ENCODE measurements at regions of chr10 and their contacts with region 1.

Region 1: GRCh38 chr10:91908337-91909116 is 759 bp downstream of the FGFBP3 start:
- DNase-seq: peak; percentile 83
- ATAC-seq: peak; percentile 89
- H3K4me3 ChIP-seq: peak overlapping the region; percentile 90
- H3K27ac ChIP-seq: no peak overlapping the region
- H3K4me1 ChIP-seq: 0 out of 2 replicates have a peak, but pooled peaks cover 16% of the 10 kb centered on the region
- H3K27me3 ChIP-seq: no peaks in the 10 kb centered on the region
- CTCF ChIP-seq: peak; percentile 54

Region 2: GRCh38 chr10:91643700-91644099 is 264.8 kb before region 1 on chr10:
- CTCF ChIA-PET with region 1: no interaction called
- POLR2A ChIA-PET with region 1: no interaction called
- intact Hi-C with region 1: loop called (anchors 2 kb)
- DNase-seq: peak; percentile 63
- ATAC-seq: peak; percentile 85
- H3K4me3 ChIP-seq: no peak overlapping the region
- H3K27ac ChIP-seq: no peak overlapping the region
- H3K4me1 ChIP-seq: peaks cover 9% of the 10 kb centered on the region
- H3K27me3 ChIP-seq: no peaks in the 10 kb centered on the region
- CTCF ChIP-seq: peak; percentile 61

Region 3: DNA sequence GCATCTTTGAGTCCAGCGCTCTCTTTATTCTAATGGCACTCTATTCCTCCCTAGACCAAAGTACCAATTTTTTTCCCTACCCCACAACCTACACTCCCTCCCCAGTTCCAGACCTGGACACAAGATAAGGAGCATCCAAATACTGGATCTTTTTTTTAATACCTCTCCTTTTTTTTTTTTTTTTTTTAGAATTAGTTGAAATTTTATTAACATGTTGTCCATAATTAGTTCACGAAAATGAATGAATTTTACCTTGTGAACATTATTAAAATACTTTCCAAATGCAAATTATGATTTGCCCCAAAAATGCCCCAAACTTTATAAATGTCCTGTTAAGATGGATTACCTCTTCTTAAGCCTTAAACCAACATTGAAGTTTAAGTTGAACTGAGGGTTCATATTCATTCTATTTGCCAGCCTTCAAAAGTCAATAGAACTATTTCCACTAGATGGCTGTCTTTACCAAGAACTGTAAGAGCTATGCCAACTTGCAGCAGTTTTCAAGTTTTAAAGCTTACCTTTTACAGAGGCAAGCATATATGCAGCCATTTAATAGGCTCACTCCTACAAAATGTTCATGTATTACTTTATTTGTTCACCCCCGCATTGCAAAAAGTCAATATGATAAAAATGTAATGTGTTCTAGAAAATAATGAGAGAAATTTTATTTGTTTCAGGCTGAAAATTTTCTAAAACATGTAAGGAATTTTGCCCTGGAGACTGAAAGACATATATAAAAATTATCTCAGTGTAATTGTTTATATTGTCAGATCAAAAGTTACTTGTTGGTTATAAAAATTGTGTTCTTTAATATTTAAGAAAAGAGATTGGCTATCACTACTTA is 150.0 kb before region 1 on chr10:
- CTCF ChIA-PET with region 1: interaction called, 4 read pairs
- POLR2A ChIA-PET with region 1: no interaction called
- intact Hi-C with region 1: loop called (anchors 1 kb)
- DNase-seq: peak; percentile 75
- ATAC-seq: peak; percentile 77
- H3K4me3 ChIP-seq: no peak overlapping the region
- H3K27ac ChIP-seq: no peak overlapping the region
- H3K4me1 ChIP-seq: no peaks in the 10 kb centered on the region; the same call in 1 of the 2 replicates
- H3K27me3 ChIP-seq: no peaks in the 10 kb centered on the region
- CTCF ChIP-seq: peak; percentile 71

Region 4: GRCh38 chr10:91856637-91857036 is 51.9 kb before region 1 on chr10:
- CTCF ChIA-PET with region 1: interaction called, 4 read pairs
- POLR2A ChIA-PET with region 1: no interaction called
- intact Hi-C with region 1: loop called (anchors 2 kb)
- DNase-seq: peak; percentile 39
- ATAC-seq: no peak
- H3K4me3 ChIP-seq: no peak overlapping the region
- H3K27ac ChIP-seq: no peak overlapping the region
- H3K4me1 ChIP-seq: no peaks in the 10 kb centered on the region
- H3K27me3 ChIP-seq: no peaks in the 10 kb centered on the region
- CTCF ChIP-seq: peak; percentile 68